Activated CD4-positive, alpha-beta T cell treated with anti-CD3 and anti-CD28 coated beads, Interleukin-2, amount 10 ng/mL, durations not matched to agents 7 days and 5 days (primary cell): ENCODE measurements at regions of chr12 and their contacts with region 1.

Region 1: DNA sequence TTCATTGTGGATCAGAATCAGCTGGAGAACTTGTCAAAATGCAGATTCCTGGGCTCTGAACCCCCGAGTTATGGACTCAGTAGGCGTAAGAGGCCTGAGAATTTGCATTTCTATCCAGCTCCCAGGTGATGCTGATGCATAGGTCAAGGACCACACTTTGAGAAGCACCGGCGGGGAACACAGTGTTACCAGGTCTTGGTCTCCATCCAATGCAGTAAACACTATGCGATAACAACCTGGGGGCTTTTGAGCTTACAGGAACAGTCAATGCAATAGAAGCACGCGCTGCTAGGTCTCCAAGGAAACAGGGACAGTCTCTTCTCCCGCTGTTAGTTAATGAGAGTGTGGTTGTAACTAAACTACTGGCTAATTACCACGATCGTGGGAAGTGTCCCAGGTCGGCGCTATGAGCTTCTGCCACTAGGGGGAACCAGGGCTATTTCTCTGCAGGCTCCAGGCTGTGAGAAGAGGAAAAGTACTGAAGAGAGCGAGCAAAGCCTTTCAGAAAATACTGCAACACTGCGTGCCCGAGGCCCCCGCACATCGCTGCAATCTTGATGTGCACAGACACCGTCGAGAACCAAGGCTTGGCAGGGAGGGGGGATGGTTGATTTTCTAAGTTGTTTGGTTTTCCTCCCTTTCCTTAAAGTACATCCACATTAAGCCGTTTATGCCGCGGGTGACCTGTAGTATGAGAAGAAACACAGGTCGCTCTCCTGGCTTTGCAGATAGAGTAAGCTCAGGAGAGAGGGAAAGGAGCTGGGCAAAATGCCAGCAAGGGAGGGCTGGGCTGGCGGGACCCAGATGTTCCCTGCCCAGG is 52.0 kb upstream of the KCNA1 start:
- DNase-seq: peak; percentile 81
- H3K4me3 Mint-ChIP-seq: peak overlapping the region; percentile 34
- H3K27ac Mint-ChIP-seq: no peak overlapping the region
- H3K4me1 Mint-ChIP-seq: peaks cover 20% of the 10 kb centered on the region
- H3K27me3 Mint-ChIP-seq: peaks cover 28% of the 10 kb centered on the region

Region 2: GRCh38 chr12:4829161-4829792 is 28.4 kb before region 1 on chr12:
- CTCF ChIA-PET with region 1: interaction called, 70 read pairs
- POLR2A ChIA-PET with region 1: no interaction called
- DNase-seq: peak; percentile 33
- H3K4me3 Mint-ChIP-seq: peak overlapping the region; percentile 74
- H3K27ac Mint-ChIP-seq: peak overlapping the region; percentile 97
- H3K4me1 Mint-ChIP-seq: peaks cover 68% of the 10 kb centered on the region
- H3K27me3 Mint-ChIP-seq: no peaks in the 10 kb centered on the region